ENCODE measurements at regions of chr4 and their contacts with region 1.

Region 1: DNA sequence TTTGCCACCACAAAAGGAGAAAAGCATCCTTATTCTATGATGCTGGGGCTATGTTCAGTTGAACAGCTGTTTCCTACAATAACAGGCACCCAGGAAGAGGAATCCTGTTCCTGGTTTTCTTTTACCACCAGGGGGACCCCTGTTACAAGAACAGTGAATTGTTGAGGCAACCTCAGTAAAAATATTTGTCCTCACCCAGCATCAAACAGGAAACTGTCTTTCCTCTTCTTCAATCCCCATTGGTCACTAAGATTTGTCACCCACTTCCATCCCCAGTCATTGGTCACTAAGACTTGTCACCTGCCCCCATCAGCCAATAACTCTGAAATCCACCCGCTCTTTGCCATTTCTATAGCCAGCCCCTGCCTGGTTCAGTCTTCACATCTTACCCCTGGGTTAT is 143.5 kb upstream of the GALNT7 start:
- DNase-seq: peak; percentile 27 to 60
- H3K4me3 ChIP-seq: no peak overlapping the region
- H3K27ac ChIP-seq: no peak overlapping the region
- H3K4me1 ChIP-seq: peaks cover 2 to 8% (median 4%) of the 10 kb centered on the region in 4 experiments; a peak in 4 of 7 replicates
- H3K27me3 ChIP-seq: no peaks in the 10 kb centered on the region
- CTCF ChIP-seq: peak in 2 of 3 experiments; percentile 68 to 81; a peak in 3 of 4 replicates
- EP300 ChIP-seq: no peak
- POLR2A ChIP-seq: no peak
- RAD21 ChIP-seq: peak; percentile 94

Region 2: GRCh38 chr4:172707605-172708004 is 317.5 kb before region 1 on chr4:
- CTCF ChIA-PET with region 1: no interaction called
- POLR2A ChIA-PET with region 1: no interaction called
- DNase-seq: no peak
- H3K4me3 ChIP-seq: peak overlapping the region in 1 of 4 experiments; percentile 20; a peak in 1 of 8 replicates
- H3K27ac ChIP-seq: no peak overlapping the region
- H3K4me1 ChIP-seq: peaks cover 0 to 8% (median 3%) of the 10 kb centered on the region in 4 experiments; a peak in 5 of 7 replicates
- H3K27me3 ChIP-seq: no peaks in the 10 kb centered on the region
- CTCF ChIP-seq: no peak
- EP300 ChIP-seq: no peak
- POLR2A ChIP-seq: no peak
- RAD21 ChIP-seq: no peak

Region 3: GRCh38 chr4:173039617-173040577 is 14.8 kb after region 1 on chr4:
- CTCF ChIA-PET with region 1: interaction called, 26 read pairs
- POLR2A ChIA-PET with region 1: no interaction called
- DNase-seq: no peak
- H3K4me3 ChIP-seq: no peak overlapping the region
- H3K27ac ChIP-seq: no peak overlapping the region
- H3K4me1 ChIP-seq: peaks cover 1 to 15% (median 5%) of the 10 kb centered on the region in 4 experiments; a peak in 5 of 7 replicates
- H3K27me3 ChIP-seq: peaks cover 0 to 1% (median 0%) of the 10 kb centered on the region in 4 experiments; a peak in 1 of 7 replicates
- CTCF ChIP-seq: no peak
- EP300 ChIP-seq: no peak
- POLR2A ChIP-seq: no peak
- RAD21 ChIP-seq: no peak

Region 4: GRCh38 chr4:173057901-173058300 is 32.8 kb after region 1 on chr4:
- CTCF ChIA-PET with region 1: interaction called, 39 read pairs
- POLR2A ChIA-PET with region 1: no interaction called
- DNase-seq: no peak
- H3K4me3 ChIP-seq: no peak overlapping the region
- H3K27ac ChIP-seq: no peak overlapping the region
- H3K4me1 ChIP-seq: peaks cover 0 to 5% (median 0%) of the 10 kb centered on the region in 4 experiments; a peak in 2 of 7 replicates
- H3K27me3 ChIP-seq: no peaks in the 10 kb centered on the region
- CTCF ChIP-seq: no peak
- EP300 ChIP-seq: no peak
- POLR2A ChIP-seq: no peak
- RAD21 ChIP-seq: no peak

Region 5: GRCh38 chr4:173168396-173169177 is 143.5 kb after region 1 on chr4 and contains the start of gene GALNT7:
- CTCF ChIA-PET with region 1: interaction called, 21 read pairs
- POLR2A ChIA-PET with region 1: no interaction called
- DNase-seq: peak; percentile 54 to 83
- H3K4me3 ChIP-seq: peak within 1 kb of the TSS; percentile 82 to 93 (median 86)
- H3K27ac ChIP-seq: peak within 1 kb of the TSS; percentile 86; the same call in 1 of the 2 replicates
- H3K4me1 ChIP-seq: peaks cover 8 to 27% (median 19%) of the 10 kb centered on the region in 4 experiments
- H3K27me3 ChIP-seq: no peaks in the 10 kb centered on the region
- CTCF ChIP-seq: no peak
- EP300 ChIP-seq: peak in 1 of 2 experiments; percentile 34; a peak in 1 of 3 replicates
- POLR2A ChIP-seq: peak; percentile 58 to 78
- RAD21 ChIP-seq: no peak
- total RNA-seq, gene GALNT7: 78.9 and 85.5 TPM in 2 replicates

Region 6: DNA sequence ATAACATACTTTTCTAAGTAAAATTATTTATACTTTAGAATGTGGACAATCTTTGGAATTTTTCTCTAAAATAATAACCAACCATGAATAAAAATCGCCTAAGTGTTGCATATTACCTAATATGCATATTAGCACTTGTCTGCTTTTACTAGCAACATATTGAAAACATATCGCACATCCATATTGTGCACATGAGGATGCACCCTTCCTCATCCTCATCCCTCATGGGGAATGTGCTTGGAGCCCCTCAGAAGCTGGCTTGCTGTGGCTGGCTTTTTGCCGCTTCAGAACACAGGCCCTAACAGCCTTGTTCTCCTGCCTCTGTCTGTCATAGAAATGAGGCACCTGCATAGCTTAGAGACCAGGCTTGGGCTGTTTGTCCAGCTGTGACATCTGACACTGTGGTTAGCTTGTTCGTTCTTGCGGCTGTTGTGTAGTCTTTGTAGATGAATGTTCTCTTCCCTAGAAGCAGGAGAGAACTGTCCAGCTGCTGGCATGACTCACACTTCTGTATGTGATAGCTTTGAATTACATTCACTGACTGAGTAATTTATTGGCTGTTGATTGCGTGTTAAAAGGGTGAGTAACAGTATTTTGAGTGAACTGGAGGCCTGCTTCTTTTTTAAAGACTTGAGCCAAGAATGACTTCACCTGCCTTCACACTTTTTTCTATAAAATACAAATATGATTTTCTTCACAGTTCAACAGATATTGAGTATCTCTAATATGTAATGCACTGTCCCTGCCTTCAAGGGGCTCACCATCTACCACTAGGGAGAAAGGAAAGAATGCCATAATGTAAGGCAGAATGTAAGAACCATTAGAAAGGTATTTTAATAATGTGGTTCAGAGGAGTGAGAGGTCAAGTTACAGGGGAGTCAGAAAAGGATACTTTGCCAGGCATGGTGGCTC is 227.1 kb after region 1 on chr4:
- CTCF ChIA-PET with region 1: interaction called, 108 read pairs
- POLR2A ChIA-PET with region 1: no interaction called
- DNase-seq: no peak
- H3K4me3 ChIP-seq: no peak overlapping the region
- H3K27ac ChIP-seq: no peak overlapping the region
- H3K4me1 ChIP-seq: peaks cover 2 to 23% (median 4%) of the 10 kb centered on the region in 4 experiments; a peak in 5 of 7 replicates
- H3K27me3 ChIP-seq: no peaks in the 10 kb centered on the region; a peak in 1 of 7 replicates
- CTCF ChIP-seq: no peak
- EP300 ChIP-seq: no peak
- POLR2A ChIP-seq: no peak
- RAD21 ChIP-seq: no peak

Measured in H1 (cell line).